CD4-positive, alpha-beta T cell (primary cell): ENCODE measurements at regions of chr17 and their contacts with region 1.

Region 1: GRCh38 chr17:64073771-64074703 is 53.6 kb upstream of the ICAM2 start:
- DNase-seq: peak in 1 of 14 experiments; percentile 34
- ATAC-seq: no peak
- H3K4me3 ChIP-seq: no peak overlapping the region
- H3K4me3 Mint-ChIP-seq: no peak overlapping the region
- H3K27ac ChIP-seq: no peak overlapping the region
- H3K27ac Mint-ChIP-seq: no peak overlapping the region
- H3K4me1 ChIP-seq: peaks cover 21% of the 10 kb centered on the region
- H3K4me1 Mint-ChIP-seq: peaks cover 26% of the 10 kb centered on the region
- H3K27me3 ChIP-seq: no peaks in the 10 kb centered on the region
- H3K27me3 Mint-ChIP-seq: no peaks in the 10 kb centered on the region
- CTCF ChIP-seq: no peak

Region 2: GRCh38 chr17:64095144-64095882 is 21.3 kb after region 1 on chr17:
- CTCF ChIA-PET with region 1: no interaction called
- POLR2A ChIA-PET with region 1: interaction called, 4 read pairs
- intact Hi-C with region 1: loop called in 1 of 2 experiments (anchors 2 kb)
- DNase-seq: no peak
- ATAC-seq: no peak
- H3K4me3 ChIP-seq: no peak overlapping the region
- H3K4me3 Mint-ChIP-seq: no peak overlapping the region
- H3K27ac ChIP-seq: no peak overlapping the region
- H3K27ac Mint-ChIP-seq: peak overlapping the region; percentile 12
- H3K4me1 ChIP-seq: peaks cover 43% of the 10 kb centered on the region
- H3K4me1 Mint-ChIP-seq: peaks cover 93% of the 10 kb centered on the region
- H3K27me3 ChIP-seq: no peaks in the 10 kb centered on the region
- H3K27me3 Mint-ChIP-seq: no peaks in the 10 kb centered on the region
- CTCF ChIP-seq: no peak

Region 3: DNA sequence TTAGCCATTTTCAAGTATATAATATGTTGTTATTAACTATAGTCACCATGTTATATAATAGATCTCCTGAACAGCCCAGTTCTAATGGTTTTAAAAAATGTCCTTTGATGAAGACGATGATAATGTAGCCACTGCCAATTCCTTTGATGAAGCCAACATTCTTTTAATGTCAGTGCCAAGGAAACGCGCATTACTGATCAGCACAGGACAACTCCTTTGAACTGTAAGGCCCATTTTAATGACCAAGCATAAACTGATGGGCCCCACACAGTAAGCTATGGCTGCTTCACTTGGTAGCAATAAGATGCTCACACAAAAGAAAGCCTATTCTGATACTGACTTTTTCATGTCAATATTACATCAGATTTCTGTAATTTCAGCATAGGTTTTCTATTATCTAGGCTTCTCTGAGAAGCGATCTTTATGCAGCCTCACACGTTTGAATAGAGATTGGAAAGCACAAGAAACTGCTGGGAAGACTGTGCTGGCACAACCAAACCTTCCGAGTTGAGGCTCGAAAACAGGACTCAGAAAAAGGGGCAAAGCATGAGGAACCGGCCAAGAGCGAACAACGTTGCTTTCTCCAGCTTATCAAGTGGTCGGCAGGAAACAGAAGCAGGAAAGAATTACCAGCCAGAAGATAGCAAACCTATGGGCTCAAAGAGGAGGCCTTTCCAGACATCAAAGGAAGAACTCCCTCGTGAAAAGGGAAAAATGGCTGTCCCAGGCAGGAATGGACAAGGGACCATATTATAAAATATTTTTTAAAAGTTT is 36.5 kb after region 1 on chr17:
- CTCF ChIA-PET with region 1: no interaction called
- POLR2A ChIA-PET with region 1: interaction called, 3 read pairs
- intact Hi-C with region 1: loop called in 1 of 2 experiments (anchors 5 kb)
- DNase-seq: no peak
- ATAC-seq: no peak
- H3K4me3 ChIP-seq: no peak overlapping the region
- H3K4me3 Mint-ChIP-seq: no peak overlapping the region
- H3K27ac ChIP-seq: no peak overlapping the region
- H3K27ac Mint-ChIP-seq: peak overlapping the region; percentile 84
- H3K4me1 ChIP-seq: peaks cover 56% of the 10 kb centered on the region
- H3K4me1 Mint-ChIP-seq: peaks cover 75% of the 10 kb centered on the region
- H3K27me3 ChIP-seq: no peaks in the 10 kb centered on the region
- H3K27me3 Mint-ChIP-seq: no peaks in the 10 kb centered on the region
- CTCF ChIP-seq: no peak